CD14-positive monocyte (primary cell): ENCODE measurements at regions of chr5 and their contacts with region 1.

Region 1: GRCh38 chr5:10627160-10627701 is 63.4 kb downstream of the ANKRD33B start:
- DNase-seq: no peak
- H3K4me3 ChIP-seq: peak overlapping the region in 1 of 3 experiments; percentile 67
- H3K4me3 Mint-ChIP-seq: peak overlapping the region; percentile 67 to 87
- H3K27ac ChIP-seq: peak overlapping the region; percentile 40 to 43
- H3K27ac Mint-ChIP-seq: peak overlapping the region; percentile 66 to 94 (median 82)
- H3K4me1 ChIP-seq: peaks cover 42 to 50% of the 10 kb centered on the region in 2 donors
- H3K4me1 Mint-ChIP-seq: peaks cover 54% of the 10 kb centered on the region
- H3K27me3 ChIP-seq: no peaks in the 10 kb centered on the region
- H3K27me3 Mint-ChIP-seq: peaks cover 2 to 11% (median 5%) of the 10 kb centered on the region in 3 donors
- CTCF ChIP-seq: no peak

Region 2: DNA sequence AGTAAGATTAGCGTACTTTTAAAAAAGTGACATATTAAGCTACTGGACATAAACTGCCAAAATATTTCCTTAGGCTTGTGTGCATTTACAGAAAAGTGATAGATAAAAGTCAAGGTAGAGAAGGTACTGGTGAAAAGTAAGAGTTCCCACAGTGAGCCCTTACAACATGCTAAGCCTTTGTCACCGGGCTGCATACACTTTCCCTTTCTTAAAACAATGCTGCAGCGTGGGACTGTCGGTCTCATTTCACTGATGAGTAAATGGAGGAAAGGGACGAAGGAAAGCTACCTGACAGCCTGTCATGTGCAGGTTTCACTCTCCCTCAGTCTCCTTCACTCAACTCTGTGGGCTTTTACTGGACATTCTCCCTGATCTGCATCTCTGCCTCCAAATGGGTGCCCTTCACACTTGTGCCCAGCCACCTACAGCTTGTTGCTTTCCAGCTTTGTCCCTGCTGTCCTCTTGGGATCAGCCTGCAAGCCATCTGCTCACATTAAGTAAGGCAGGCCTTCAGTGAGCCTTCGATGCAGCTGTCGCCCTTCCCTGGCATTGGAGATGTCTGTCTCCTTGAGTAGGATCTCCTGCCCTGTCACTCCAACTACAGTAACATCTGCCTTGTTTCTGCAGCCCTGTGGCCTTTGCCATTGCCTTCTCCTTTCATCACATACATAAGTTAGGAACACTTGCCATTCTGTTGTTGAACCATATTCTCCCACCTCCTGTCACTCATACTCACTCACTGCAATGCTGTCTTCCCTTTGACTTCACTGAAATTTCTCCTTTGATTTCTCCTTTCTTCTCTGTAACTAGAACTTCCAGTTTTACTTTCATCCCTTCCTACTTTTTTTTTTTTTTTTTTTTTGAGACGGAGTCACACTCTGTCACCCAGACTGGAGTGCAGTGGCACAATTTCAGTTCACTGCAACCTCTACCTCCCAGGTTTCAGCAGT is 194.9 kb before region 1 on chr5:
- intact Hi-C with region 1: no loop called
- DNase-seq: no peak
- H3K4me3 ChIP-seq: no peak overlapping the region
- H3K4me3 Mint-ChIP-seq: no peak overlapping the region
- H3K27ac ChIP-seq: peak overlapping the region in 1 of 2 donors; percentile 4
- H3K27ac Mint-ChIP-seq: peak overlapping the region in 4 of 7 donors; percentile 38 to 75 (median 45)
- H3K4me1 ChIP-seq: peaks cover 0 to under 1% of the 10 kb centered on the region in 2 donors
- H3K4me1 Mint-ChIP-seq: peaks cover 7% of the 10 kb centered on the region
- H3K27me3 ChIP-seq: no peaks in the 10 kb centered on the region
- H3K27me3 Mint-ChIP-seq: no peaks in the 10 kb centered on the region
- CTCF ChIP-seq: no peak

Region 3: GRCh38 chr5:10452768-10453331 is 174.4 kb before region 1 on chr5:
- intact Hi-C with region 1: loop called (anchors 2 to 5 kb)
- DNase-seq: peak; percentile 54 to 68 (median 64)
- H3K4me3 ChIP-seq: no peak overlapping the region
- H3K4me3 Mint-ChIP-seq: no peak overlapping the region
- H3K27ac ChIP-seq: no peak overlapping the region
- H3K27ac Mint-ChIP-seq: peak overlapping the region in 2 of 7 donors; percentile 45 to 61
- H3K4me1 ChIP-seq: peaks cover 57 to 62% of the 10 kb centered on the region in 2 donors
- H3K4me1 Mint-ChIP-seq: peaks cover 61% of the 10 kb centered on the region
- H3K27me3 ChIP-seq: no peaks in the 10 kb centered on the region
- H3K27me3 Mint-ChIP-seq: peaks cover 0 to 2% (median 2%) of the 10 kb centered on the region in 3 donors
- CTCF ChIP-seq: peak; percentile 72

Region 4: DNA sequence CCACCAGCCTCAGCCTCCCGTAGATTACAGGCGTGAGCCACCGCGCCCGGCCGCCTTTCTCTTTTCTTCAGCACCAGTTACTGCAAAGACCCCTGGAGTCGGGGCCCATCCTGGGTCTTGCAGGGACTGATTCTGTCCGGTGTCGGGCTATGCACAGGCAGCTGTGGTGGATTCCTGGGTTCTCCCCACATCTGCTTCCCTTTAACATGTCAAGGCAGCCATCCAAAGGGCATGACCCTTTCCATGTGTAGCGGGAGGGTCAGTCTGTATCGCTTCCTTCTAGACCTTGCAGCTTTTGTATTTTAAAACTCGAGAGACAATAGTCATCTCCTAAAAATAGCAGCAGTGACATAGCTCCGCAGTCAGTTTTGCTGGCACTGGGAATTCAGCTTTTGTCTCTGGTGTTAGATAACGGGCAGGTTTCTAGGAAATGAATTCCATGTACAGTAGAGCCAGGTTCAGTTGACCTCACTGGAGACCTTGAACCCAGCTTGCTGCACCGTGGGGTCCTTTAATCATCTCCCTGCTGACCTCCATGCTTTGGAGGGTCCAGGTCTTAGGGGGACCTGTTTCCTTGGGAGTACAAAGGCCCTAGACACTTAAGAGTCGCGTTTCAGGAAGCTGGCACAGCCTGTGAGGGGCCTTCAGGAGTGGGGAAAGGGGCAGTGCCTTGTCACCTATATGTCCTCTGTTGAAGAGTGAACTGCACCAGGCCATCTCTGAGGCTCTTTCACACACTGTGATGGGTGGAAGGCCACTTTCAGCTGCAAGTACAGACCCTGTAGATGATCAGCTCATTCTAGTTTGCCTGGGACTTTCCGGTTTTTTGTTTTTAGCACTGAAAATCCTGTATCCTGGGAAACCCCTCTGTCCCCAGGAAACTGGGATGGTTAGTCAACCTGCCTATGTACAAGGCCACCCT is 49.6 kb before region 1 on chr5:
- intact Hi-C with region 1: loop called in 1 of 2 experiments (anchors 5 kb)
- DNase-seq: peak; percentile 41 to 75 (median 48)
- H3K4me3 ChIP-seq: no peak overlapping the region
- H3K4me3 Mint-ChIP-seq: no peak overlapping the region
- H3K27ac ChIP-seq: no peak overlapping the region
- H3K27ac Mint-ChIP-seq: peak overlapping the region in 5 of 7 donors; percentile 10 to 72 (median 40)
- H3K4me1 ChIP-seq: peaks cover 26 to 34% of the 10 kb centered on the region in 2 donors
- H3K4me1 Mint-ChIP-seq: peaks cover 59% of the 10 kb centered on the region
- H3K27me3 ChIP-seq: no peaks in the 10 kb centered on the region
- H3K27me3 Mint-ChIP-seq: peaks cover 0 to 2% (median 1%) of the 10 kb centered on the region in 3 donors
- CTCF ChIP-seq: no peak

Region 5: DNA sequence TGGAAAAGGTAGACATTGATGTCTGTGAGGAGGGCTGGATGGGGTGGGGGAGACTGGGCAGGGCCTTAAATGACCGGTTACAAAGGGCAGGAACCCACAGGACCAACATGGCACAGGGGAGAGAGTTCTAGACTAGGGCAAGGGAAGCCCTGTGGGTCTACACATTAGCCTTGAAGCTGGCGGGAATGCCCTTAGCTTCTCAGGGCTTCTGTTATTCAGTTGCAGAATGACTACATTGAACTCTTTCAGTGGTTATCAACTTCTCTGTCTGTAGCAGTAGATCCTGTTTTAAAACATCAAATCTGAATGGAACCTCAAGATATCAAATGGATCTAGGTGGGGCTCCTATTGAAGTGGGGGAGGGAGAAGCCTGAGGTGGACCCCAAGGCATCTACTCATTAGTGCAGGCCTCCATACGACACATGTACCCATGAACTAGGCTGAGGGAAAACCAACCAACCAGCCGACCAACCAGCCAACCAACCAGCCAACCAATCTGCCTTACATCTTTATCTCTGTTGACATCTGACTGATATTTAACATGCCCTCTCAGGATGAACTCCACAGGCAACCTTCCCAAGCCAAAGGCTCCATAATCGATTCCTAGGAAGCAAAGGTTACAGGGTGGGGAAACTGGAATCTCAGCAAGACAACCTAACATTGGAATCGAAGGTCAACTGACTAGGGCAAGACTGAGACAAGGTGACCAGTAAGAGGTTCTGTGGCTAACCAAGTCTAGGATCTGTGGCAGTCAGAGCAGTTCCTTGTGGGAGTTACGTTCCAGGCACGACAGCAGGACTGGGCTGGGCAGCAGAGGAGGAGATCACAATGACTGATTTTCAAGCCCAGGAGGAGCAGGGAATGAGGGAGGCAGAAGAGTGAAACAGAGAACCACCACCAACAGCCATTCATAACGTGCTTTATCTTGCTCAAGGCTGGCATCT is 85.6 kb after region 1 on chr5:
- intact Hi-C with region 1: no loop called
- DNase-seq: no peak
- H3K4me3 ChIP-seq: no peak overlapping the region
- H3K4me3 Mint-ChIP-seq: no peak overlapping the region
- H3K27ac ChIP-seq: peak overlapping the region in 1 of 2 donors; percentile 49
- H3K27ac Mint-ChIP-seq: peak overlapping the region in 6 of 7 donors; percentile 39 to 73 (median 54)
- H3K4me1 ChIP-seq: no peaks in the 10 kb centered on the region
- H3K4me1 Mint-ChIP-seq: no peaks in the 10 kb centered on the region
- H3K27me3 ChIP-seq: no peaks in the 10 kb centered on the region
- H3K27me3 Mint-ChIP-seq: peaks cover 0 to 3% (median 0%) of the 10 kb centered on the region in 3 donors
- CTCF ChIP-seq: no peak